ENCODE measurements at regions of chr7 and their contacts with region 1.

Region 1: DNA sequence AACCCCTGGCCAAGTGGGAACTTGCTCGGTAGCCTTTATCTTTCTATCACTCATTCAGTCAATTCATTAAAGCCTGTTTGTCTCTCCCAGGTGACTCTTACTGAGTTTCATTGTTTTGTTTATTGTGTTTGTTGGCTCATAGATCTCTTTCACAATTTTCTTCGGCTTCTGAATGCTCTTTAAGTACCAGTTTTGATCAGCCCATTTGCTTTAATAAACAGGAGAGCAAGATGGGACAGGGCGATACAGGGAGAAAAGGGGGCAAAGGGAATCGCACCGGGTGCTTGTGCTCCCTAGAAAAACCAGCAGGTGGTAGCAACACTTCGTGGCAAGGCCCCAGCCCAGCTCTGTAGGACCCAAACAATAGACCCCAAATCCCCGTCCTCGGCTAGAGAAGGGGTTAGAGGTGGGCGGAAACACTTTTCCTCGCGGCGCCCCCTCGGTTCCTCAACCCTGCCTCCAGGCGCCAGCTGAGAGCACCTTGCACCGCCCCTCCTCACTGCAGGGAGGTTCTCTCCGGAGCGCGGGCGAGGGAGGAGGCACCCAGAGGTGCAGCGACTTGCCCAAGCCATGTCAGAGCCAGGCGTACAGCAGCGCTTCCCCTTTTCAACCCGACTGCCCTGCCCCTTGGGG is 1.0 kb upstream of the EPHB6 start:
- DNase-seq: peak; percentile 61
- H3K4me3 ChIP-seq: peak overlapping the region; percentile 46
- H3K27ac ChIP-seq: peak overlapping the region; percentile 57
- H3K4me1 ChIP-seq: peaks cover 6% of the 10 kb centered on the region
- H3K27me3 ChIP-seq: no peaks in the 10 kb centered on the region
- CTCF ChIP-seq: peak; percentile 73

Region 2: DNA sequence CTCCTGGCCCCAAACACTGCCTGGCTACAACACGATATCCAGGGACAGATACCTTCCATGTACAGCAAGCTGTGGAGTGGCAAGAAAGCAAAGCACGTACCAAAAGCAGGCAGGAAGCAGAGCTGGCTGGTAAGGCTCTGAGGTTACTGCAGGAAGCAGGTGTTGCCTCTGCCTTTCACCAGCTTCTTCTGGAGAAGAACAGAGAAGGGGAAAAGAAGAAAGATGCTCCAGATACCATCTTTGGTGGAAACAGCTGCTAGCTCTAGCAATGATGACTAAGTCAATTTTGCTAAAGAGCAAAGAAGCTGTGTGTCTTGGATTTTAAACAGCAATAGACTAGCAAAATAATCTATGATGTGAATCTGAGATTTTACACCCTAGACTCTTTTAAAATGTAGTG is 139.5 kb before region 1 on chr7:
- intact Hi-C with region 1: no loop called
- DNase-seq: no peak
- H3K4me3 ChIP-seq: no peak overlapping the region
- H3K27ac ChIP-seq: no peak overlapping the region
- H3K4me1 ChIP-seq: no peaks in the 10 kb centered on the region
- H3K27me3 ChIP-seq: no peaks in the 10 kb centered on the region
- CTCF ChIP-seq: no peak

Region 3: GRCh38 chr7:143214789-143215679 is 361.2 kb after region 1 on chr7:
- intact Hi-C with region 1: loop called (anchors 10 kb)
- DNase-seq: peak; percentile 69
- H3K4me3 ChIP-seq: no peak overlapping the region
- H3K27ac ChIP-seq: no peak overlapping the region
- H3K4me1 ChIP-seq: no peaks in the 10 kb centered on the region
- H3K27me3 ChIP-seq: no peaks in the 10 kb centered on the region
- CTCF ChIP-seq: peak; percentile 98